ENCODE measurements at regions of chr7 and their contacts with region 1.

Region 1: DNA sequence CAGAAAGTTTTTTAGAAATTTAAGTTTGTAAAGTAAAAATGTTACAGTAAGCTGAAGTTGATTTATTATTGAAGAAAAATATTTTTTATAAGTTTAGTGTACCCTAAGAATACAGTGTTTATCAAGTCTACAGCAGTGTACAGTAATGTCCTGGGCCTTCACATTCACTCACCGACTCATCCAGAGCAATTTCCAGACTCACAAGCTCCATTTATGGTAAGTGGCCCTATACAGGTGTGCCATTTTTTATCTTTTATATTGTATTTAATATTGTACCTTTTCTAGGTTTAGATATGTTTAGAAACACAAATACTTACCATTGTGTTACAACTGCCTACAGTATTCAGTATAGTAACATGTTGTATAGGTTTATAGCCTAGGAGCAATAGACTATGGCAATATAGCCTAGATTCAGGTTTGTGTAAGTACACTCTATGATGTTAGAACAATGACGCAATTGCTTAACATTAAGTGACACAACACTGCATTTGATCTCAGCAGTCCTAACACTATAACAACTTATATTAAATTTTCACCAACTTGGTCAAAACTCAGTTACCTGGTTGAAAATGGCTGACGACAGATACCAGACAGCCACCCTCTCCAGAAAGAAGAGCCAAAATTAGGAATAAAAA is 45.7 kb downstream of the HIBADH start:
- DNase-seq: no peak
- H3K4me3 ChIP-seq: no peak overlapping the region
- H3K27ac ChIP-seq: no peak overlapping the region
- H3K4me1 ChIP-seq: no peaks in the 10 kb centered on the region
- H3K27me3 ChIP-seq: no peaks in the 10 kb centered on the region
- CTCF ChIP-seq: no peak
- EP300 ChIP-seq: no peak
- POLR2A ChIP-seq: no peak

Region 2: GRCh38 chr7:27656724-27657123 is 39.7 kb after region 1 on chr7:
- intact Hi-C with region 1: loop called (anchors 5 kb)
- DNase-seq: no peak
- H3K4me3 ChIP-seq: no peak overlapping the region
- H3K27ac ChIP-seq: no peak overlapping the region
- H3K4me1 ChIP-seq: peaks cover 0 to 14% (median 7%) of the 10 kb centered on the region in 4 donors
- H3K27me3 ChIP-seq: no peaks in the 10 kb centered on the region
- CTCF ChIP-seq: no peak
- EP300 ChIP-seq: no peak
- POLR2A ChIP-seq: no peak

Measured in sigmoid colon (tissue), 7 donors.